ENCODE measurements at regions of chr6 and their contacts with region 1.

Region 1: DNA sequence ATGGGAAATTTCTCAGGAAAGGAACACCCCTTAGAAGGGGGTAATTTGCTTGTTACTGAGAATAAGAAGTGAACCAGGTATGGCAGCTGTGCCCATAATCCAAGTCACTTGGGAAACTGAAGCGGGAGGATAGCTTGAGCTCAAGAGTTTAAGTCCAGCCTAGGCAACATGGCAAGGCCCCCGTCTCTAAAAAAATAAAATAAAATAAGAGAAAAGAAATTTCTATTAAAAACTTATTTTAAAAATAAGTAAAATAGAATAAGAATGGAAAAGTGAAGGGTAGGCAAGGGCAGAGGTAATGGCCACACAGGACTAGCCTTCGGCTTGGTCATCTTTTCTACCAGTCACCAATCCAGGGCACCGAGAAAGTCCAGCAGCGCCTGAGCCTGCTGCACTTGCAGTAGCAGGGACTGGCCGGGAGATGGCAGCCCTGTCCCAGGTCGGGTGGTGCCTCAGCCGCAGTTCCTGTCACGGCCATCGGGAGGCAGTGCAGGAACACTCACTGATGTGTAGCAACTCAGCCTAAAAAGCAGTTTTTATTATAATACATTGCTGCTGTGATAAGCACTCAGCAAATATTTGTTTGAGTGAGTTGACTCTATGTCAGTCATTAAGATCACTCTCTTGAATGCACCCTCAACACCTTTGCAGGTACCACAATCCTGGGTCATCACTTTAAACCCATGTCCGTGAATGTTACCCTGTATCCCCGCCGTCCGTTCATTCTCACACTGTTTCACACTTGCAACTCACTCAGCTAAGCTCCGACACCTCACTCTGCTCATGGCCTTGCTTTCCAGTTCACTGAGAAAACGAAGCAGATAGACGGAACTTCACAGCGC is 23.2 kb upstream of the GCM1 start:
- DNase-seq: peak; percentile 95
- ATAC-seq: peak; percentile 98
- H3K4me3 Mint-ChIP-seq: no peak overlapping the region
- H3K27ac Mint-ChIP-seq: no peak overlapping the region
- H3K4me1 Mint-ChIP-seq: no peaks in the 10 kb centered on the region
- H3K27me3 Mint-ChIP-seq: no peaks in the 10 kb centered on the region

Region 2: GRCh38 chr6:53005663-53006250 is 166.1 kb before region 1 on chr6:
- CTCF ChIA-PET with region 1: no interaction called
- POLR2A ChIA-PET with region 1: no interaction called
- intact Hi-C with region 1: no loop called
- DNase-seq: no peak
- ATAC-seq: no peak
- H3K4me3 Mint-ChIP-seq: no peak overlapping the region
- H3K27ac Mint-ChIP-seq: no peak overlapping the region
- H3K4me1 Mint-ChIP-seq: no peaks in the 10 kb centered on the region
- H3K27me3 Mint-ChIP-seq: no peaks in the 10 kb centered on the region

Region 3: DNA sequence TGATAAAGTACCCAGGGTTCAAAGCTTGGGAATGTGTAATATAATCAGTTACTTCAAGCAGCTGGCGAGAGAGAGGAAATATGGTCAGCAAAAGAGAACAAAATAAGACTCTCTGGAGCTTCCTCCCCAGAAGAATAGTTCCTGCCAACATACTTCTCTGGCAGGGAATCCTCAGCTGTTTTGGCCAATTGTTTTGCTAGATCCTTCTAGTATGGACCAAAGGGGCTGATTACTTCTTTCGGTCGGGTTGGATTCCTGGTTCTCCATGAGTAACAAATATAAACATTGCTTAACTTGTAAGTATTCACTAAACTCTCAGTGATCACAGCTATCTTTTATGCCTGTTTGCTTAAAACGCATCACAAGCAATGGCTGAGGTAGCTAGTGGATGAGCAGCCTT is 138.1 kb before region 1 on chr6:
- CTCF ChIA-PET with region 1: no interaction called
- POLR2A ChIA-PET with region 1: no interaction called
- intact Hi-C with region 1: no loop called
- DNase-seq: no peak
- ATAC-seq: no peak
- H3K4me3 Mint-ChIP-seq: no peak overlapping the region
- H3K27ac Mint-ChIP-seq: no peak overlapping the region
- H3K4me1 Mint-ChIP-seq: peaks cover 6% of the 10 kb centered on the region
- H3K27me3 Mint-ChIP-seq: no peaks in the 10 kb centered on the region

Region 4: GRCh38 chr6:53205778-53206177 is 34.0 kb after region 1 on chr6:
- CTCF ChIA-PET with region 1: no interaction called
- POLR2A ChIA-PET with region 1: no interaction called
- intact Hi-C with region 1: no loop called
- DNase-seq: no peak
- ATAC-seq: no peak
- H3K4me3 Mint-ChIP-seq: no peak overlapping the region
- H3K27ac Mint-ChIP-seq: no peak overlapping the region
- H3K4me1 Mint-ChIP-seq: peaks cover 6% of the 10 kb centered on the region
- H3K27me3 Mint-ChIP-seq: no peaks in the 10 kb centered on the region

Region 5: DNA sequence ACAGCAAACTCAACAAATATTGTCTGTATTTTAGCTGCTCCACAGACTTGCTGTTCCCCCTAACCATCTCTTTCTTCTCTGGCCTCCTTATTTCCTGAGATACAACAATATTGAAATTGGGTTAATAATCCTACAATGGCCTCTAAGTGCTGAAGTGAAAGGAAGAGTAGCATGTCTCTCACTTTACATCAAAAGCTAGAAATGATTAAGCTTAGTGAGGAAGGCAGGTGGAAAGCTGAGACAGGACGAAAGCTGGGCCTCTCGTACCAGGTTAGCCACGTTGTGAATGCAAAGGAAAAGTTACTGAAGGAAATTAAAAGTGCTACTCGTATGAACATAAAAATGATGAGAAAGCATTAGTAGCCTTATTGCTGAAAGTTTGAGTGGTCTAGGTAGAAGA is 113.1 kb after region 1 on chr6:
- CTCF ChIA-PET with region 1: interaction called, 3 read pairs
- POLR2A ChIA-PET with region 1: no interaction called
- intact Hi-C with region 1: loop called in 1 of 2 experiments (anchors 5 kb)
- DNase-seq: peak; percentile 46
- ATAC-seq: peak; percentile 82
- H3K4me3 Mint-ChIP-seq: no peak overlapping the region
- H3K27ac Mint-ChIP-seq: peak overlapping the region; percentile 68
- H3K4me1 Mint-ChIP-seq: peaks cover 49% of the 10 kb centered on the region
- H3K27me3 Mint-ChIP-seq: no peaks in the 10 kb centered on the region

Region 6: DNA sequence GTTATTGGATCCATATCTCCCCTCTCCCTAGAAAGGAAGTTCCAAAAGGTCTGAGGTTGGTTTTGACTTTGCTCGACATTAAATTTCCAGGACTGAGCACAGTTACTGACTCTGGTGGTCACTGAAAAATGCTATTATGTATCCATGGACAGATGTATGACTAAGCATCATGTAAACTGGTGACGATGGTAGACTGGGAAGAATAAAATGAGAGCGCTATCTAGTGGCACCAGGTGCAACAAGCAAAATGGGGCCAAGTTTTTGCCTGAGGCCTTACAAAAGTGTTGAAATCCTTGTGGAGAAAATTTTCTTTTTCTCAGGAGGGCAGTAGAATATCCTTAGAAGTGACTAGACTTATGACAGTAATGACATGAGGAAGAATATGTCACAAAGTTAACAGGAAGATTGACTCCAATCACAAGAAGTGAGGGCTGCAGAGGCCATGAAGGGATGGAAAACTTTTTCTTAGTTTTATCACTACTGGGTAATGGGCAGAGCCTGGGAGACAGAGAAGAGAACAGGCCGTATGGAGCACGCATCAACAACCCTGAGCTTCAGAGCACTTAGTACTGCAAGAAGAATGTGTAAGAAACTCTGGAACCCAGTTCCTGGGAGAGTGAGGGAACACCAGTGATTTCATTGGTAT is 265.9 kb after region 1 on chr6:
- CTCF ChIA-PET with region 1: interaction called, 14 read pairs
- POLR2A ChIA-PET with region 1: no interaction called
- intact Hi-C with region 1: loop called (anchors 1 kb)
- DNase-seq: peak; percentile 34
- ATAC-seq: peak; percentile 53
- H3K4me3 Mint-ChIP-seq: no peak overlapping the region
- H3K27ac Mint-ChIP-seq: no peak overlapping the region
- H3K4me1 Mint-ChIP-seq: peaks cover 28% of the 10 kb centered on the region
- H3K27me3 Mint-ChIP-seq: peaks cover 3% of the 10 kb centered on the region

Region 7: GRCh38 chr6:53484476-53485280 is 312.9 kb after region 1 on chr6:
- CTCF ChIA-PET with region 1: interaction called, 69 read pairs
- POLR2A ChIA-PET with region 1: no interaction called
- intact Hi-C with region 1: loop called (anchors 1 kb)
- DNase-seq: peak; percentile 82
- ATAC-seq: no peak
- H3K4me3 Mint-ChIP-seq: no peak overlapping the region
- H3K27ac Mint-ChIP-seq: no peak overlapping the region
- H3K4me1 Mint-ChIP-seq: peaks cover 11% of the 10 kb centered on the region
- H3K27me3 Mint-ChIP-seq: peaks cover 21% of the 10 kb centered on the region

Region 8: DNA sequence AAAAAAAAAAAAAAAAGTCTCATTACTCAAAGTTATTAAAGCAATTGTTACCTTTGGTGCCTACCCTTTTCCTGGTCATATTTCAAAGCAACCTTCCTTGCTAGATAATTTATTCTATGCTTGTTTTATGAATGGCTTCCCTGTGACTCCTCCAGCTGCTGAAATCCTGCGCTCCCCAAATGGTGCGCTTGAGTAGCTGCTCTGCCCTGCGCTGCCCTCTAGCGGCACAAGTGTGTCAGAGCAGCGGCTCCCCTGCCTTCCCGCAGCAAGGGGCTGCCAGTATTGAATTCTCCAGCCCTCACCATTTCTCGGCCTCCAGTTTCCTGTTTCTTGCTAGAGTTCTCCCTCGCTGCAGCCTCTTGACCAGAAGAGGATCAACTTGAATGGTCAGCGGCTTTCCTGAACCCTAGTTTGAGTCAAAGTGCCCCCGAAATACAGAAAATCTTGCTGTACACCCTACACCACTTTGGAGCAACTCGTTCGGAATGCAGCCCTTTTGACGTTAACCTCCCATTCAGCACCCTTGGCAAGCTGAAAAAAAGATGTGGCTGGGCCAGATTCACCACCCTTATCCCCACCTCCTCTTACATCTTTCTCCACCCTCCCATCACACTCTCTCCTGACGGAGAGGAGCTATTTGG is 554.1 kb after region 1 on chr6:
- CTCF ChIA-PET with region 1: interaction called, 5 read pairs
- POLR2A ChIA-PET with region 1: no interaction called
- intact Hi-C with region 1: loop called (anchors 2 to 5 kb)
- DNase-seq: peak; percentile 86
- ATAC-seq: peak; percentile 91
- H3K4me3 Mint-ChIP-seq: no peak overlapping the region
- H3K27ac Mint-ChIP-seq: no peak overlapping the region
- H3K4me1 Mint-ChIP-seq: peaks cover 5% of the 10 kb centered on the region
- H3K27me3 Mint-ChIP-seq: peaks cover 12% of the 10 kb centered on the region

Measured in activated CD4-positive, alpha-beta T cell treated with anti-CD3 and anti-CD28 coated beads for 36 hours (primary cell).